Activated CD4-positive, alpha-beta memory T cell treated with anti-CD3 and anti-CD28 coated beads for 36 hours (primary cell): ENCODE measurements at regions of chr1 and their contacts with region 1.

Region 1: GRCh38 chr1:110338886-110339406 is at the start of gene RBM15:
- DNase-seq: peak; percentile 98
- H3K4me3 Mint-ChIP-seq: no peak within 1 kb of the TSS
- H3K27ac Mint-ChIP-seq: no peak within 1 kb of the TSS
- H3K4me1 Mint-ChIP-seq: peaks cover 57% of the 10 kb centered on the region
- H3K27me3 Mint-ChIP-seq: no peaks in the 10 kb centered on the region
- total RNA-seq, gene RBM15: 59.1 to 60.2 TPM

Region 2: GRCh38 chr1:110034451-110035235 is 304.3 kb before region 1 on chr1 and contains the start of gene STRIP1:
- CTCF ChIA-PET with region 1: no interaction called
- POLR2A ChIA-PET with region 1: interaction called, 3 read pairs
- intact Hi-C with region 1: loop called (anchors 1 kb)
- DNase-seq: peak; percentile 95
- H3K4me3 Mint-ChIP-seq: peak within 1 kb of the TSS; percentile 82
- H3K27ac Mint-ChIP-seq: peak within 1 kb of the TSS; percentile 92
- H3K4me1 Mint-ChIP-seq: peaks cover 59% of the 10 kb centered on the region
- H3K27me3 Mint-ChIP-seq: no peaks in the 10 kb centered on the region
- total RNA-seq, gene STRIP1: 22.7 to 25.7 TPM

Region 3: DNA sequence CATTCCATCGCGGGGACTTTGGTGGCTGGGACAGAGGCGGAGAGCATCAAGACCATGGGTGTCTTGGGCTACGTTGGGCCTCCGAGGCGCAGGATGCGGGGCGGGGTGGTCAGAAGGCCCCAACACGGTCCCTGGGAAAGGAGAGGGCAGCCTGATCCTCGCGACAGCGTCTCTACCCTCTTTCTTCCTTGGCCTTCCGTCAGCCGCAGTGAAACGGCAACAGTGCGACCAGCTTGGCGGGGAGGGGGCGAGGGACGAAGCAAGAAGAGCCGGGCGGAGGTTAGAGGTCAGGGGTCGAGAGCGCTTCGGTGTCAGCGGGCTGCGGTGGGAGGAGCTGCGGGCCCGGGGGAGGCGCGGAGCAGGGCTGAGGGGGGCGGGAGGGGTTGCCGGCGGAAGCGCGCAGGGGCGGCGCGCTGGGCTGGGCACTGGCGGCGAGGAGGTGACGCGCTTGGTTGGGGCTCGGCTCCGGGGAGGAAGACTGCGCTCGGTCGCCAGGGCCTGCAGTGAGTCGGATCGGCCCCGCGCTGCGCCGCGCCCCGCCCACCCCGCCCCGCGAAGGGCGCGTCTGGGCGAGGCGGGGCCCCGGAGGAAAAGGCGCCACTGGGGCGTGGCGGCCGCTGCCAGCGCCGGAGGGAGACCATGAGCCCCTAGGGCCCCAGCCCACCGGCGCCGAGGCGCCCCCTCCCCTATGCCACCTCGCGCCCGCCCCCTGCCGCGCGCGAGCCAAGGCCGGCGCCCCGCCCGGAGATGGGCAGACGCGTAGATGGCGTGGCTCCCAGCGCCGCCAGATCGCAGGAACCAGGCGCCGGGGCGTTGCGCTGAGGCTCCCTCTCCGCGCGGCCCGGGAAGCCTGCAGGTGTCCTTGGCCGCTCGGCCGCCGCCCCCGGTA is 129.0 kb before region 1 on chr1 and contains the start of gene KCNC4:
- CTCF ChIA-PET with region 1: interaction called, 107 read pairs
- POLR2A ChIA-PET with region 1: interaction called, 16 read pairs
- intact Hi-C with region 1: loop called (anchors 1 kb)
- DNase-seq: peak; percentile 95
- H3K4me3 Mint-ChIP-seq: peak within 1 kb of the TSS; percentile 88
- H3K27ac Mint-ChIP-seq: peak within 1 kb of the TSS; percentile 84
- H3K4me1 Mint-ChIP-seq: peaks cover 47% of the 10 kb centered on the region
- H3K27me3 Mint-ChIP-seq: no peaks in the 10 kb centered on the region
- total RNA-seq, gene KCNC4: 15.0 to 15.1 TPM

Region 4: GRCh38 chr1:110407260-110408210 is 68.6 kb after region 1 on chr1 and contains the start of gene LAMTOR5:
- CTCF ChIA-PET with region 1: interaction called, 36 read pairs
- POLR2A ChIA-PET with region 1: interaction called, 12 read pairs
- intact Hi-C with region 1: loop called (anchors 1 kb)
- DNase-seq: peak; percentile 96
- H3K4me3 Mint-ChIP-seq: peak within 1 kb of the TSS; percentile 100
- H3K27ac Mint-ChIP-seq: peak within 1 kb of the TSS; percentile 97
- H3K4me1 Mint-ChIP-seq: peaks cover 17% of the 10 kb centered on the region
- H3K27me3 Mint-ChIP-seq: no peaks in the 10 kb centered on the region
- total RNA-seq, gene LAMTOR5: 151 to 153 TPM

Region 5: GRCh38 chr1:110879758-110880606 is 541.0 kb after region 1 on chr1:
- CTCF ChIA-PET with region 1: no interaction called
- POLR2A ChIA-PET with region 1: interaction called, 6 read pairs
- intact Hi-C with region 1: loop called (anchors 5 kb)
- DNase-seq: peak; percentile 80
- H3K4me3 Mint-ChIP-seq: peak overlapping the region; percentile 69
- H3K27ac Mint-ChIP-seq: peak overlapping the region; percentile 99
- H3K4me1 Mint-ChIP-seq: peaks cover 62% of the 10 kb centered on the region
- H3K27me3 Mint-ChIP-seq: no peaks in the 10 kb centered on the region

Region 6: DNA sequence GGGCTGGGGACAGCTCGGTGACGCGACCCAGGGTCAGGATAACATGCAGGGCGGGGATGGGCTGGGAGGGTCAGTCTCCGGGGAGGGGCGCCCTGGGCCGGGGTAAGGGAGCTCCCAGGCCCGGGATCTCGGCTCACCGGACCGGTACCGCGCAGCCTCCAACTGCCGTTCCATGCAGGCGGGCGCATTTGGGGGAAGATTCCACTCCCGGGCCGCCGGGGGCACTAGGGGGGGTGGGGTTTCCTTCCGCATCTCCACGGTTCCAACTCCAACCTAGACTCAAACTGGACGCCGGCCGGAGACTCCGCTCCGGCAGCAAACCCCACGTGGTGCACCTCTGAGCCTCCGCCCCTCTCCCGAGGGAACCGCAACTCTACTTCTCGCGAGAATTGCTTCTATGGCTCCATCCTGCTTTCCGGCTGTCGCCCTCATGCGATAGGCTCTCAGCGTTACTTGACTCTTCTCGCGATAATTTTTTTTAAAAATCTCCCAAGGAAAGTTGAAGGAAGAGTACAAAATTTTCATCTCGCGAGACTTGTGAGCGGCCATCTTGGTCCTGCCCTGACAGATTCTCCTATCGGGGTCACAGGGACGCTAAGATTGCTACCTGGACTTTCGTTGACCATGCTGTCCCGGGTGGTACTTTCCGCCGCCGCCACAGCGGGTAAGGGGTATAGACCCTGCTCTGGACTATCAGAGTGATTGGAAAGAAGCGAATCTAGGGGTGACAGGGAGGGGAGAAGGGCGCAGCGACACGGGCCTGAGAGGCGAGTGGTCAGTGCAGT is 1110.2 kb after region 1 on chr1 and contains the starts of genes ATP5PB and WDR77:
- CTCF ChIA-PET with region 1: no interaction called
- POLR2A ChIA-PET with region 1: no interaction called
- intact Hi-C with region 1: loop called (anchors 2 kb)
- DNase-seq: peak; percentile 95
- H3K4me3 Mint-ChIP-seq: peak within 1 kb of the TSS; percentile 100
- H3K27ac Mint-ChIP-seq: peak within 1 kb of the TSS; percentile 94
- H3K4me1 Mint-ChIP-seq: peaks cover 73% of the 10 kb centered on the region
- H3K27me3 Mint-ChIP-seq: no peaks in the 10 kb centered on the region
- total RNA-seq, gene ATP5PB: 300 to 302 TPM
- total RNA-seq, gene WDR77: 44.6 to 48.4 TPM